ENCODE measurements at regions of chr16 and their contacts with region 1.

Region 1: DNA sequence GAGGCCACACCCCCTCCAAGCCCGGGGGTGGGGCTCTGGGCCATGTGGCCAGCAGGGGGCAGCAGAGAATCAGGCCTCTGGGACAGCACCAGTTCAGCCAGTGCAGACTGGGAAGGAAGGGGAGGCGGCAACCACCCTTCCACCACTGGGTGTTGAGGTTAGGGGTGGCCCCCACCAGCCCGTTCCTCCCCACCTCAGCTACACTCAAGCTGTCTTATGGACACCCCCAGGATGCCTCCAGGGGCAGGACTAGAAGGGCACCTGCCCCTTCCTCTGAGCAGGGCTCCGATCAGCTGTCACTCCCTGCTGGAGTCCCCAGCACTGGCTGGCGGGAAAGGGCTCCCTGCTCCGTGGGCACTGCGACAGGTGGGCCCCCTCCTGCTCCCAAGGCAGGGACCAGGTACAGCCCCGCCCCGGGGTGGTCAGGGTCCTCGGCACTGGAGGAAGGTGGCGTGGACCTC is 21.8 kb downstream of the KATNB1 start:
- DNase-seq: peak; percentile 80 to 88 (median 81)
- H3K4me3 ChIP-seq: no peak overlapping the region
- H3K4me3 Mint-ChIP-seq: no peak overlapping the region
- H3K27ac ChIP-seq: no peak overlapping the region
- H3K27ac Mint-ChIP-seq: no peak overlapping the region
- H3K4me1 ChIP-seq: no peaks in the 10 kb centered on the region
- H3K4me1 Mint-ChIP-seq: peaks cover 0 to 3% (median 0%) of the 10 kb centered on the region in 4 donors
- H3K27me3 ChIP-seq: no peaks in the 10 kb centered on the region
- H3K27me3 Mint-ChIP-seq: no peaks in the 10 kb centered on the region

Region 2: GRCh38 chr16:57863434-57864160 is 106.2 kb after region 1 on chr16:
- CTCF ChIA-PET with region 1: interaction called, 12 read pairs
- POLR2A ChIA-PET with region 1: no interaction called
- intact Hi-C with region 1: loop called (anchors 1 kb)
- DNase-seq: no peak
- H3K4me3 ChIP-seq: no peak overlapping the region
- H3K4me3 Mint-ChIP-seq: no peak overlapping the region
- H3K27ac ChIP-seq: no peak overlapping the region
- H3K27ac Mint-ChIP-seq: peak overlapping the region in 1 of 7 donors; percentile 0
- H3K4me1 ChIP-seq: no peaks in the 10 kb centered on the region
- H3K4me1 Mint-ChIP-seq: no peaks in the 10 kb centered on the region
- H3K27me3 ChIP-seq: no peaks in the 10 kb centered on the region
- H3K27me3 Mint-ChIP-seq: peaks cover 4 to 23% of the 10 kb centered on the region in 2 donors

Region 3: DNA sequence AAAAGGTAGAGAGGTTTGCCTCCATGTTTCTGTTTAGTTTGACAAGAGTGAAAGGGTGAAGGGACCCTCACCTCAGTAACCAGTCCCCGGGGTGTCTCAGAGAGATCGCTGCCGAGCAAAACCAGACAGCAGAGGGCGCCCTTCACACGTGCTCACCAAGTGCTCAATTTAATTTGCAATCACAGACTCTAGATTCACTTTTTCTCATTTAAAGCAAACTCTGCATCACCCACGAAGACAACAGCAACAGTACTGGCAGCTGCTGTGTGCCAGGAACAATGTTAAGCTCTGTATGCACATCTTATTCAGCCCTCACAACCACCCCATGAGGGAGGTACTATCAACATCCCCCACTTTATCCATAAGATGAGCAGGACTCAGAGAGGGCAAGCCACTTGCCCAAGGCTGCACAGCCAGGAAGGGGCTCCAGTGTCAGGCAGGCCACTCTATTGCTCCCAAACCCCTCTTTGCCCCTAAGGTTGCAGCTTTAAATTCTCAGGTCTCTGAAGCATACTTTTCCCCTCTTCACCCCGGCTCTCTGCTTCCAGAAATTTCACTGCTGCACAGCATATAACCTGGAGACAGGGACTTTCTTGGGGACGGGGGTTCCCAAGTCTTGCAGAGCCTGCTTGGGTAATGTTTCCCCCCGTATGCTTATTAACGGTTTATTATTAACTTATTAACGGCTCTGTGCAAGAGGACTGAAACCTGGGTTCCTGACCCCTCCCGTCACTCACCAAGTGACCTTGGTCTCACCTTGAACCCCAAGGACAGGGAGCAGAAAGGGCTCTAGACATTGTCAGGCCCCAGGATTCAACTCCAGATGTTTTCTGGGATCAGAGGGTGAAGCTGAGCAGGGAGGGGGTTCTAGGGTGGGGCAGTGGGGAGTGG is 142.7 kb after region 1 on chr16:
- CTCF ChIA-PET with region 1: interaction called, 8 read pairs
- POLR2A ChIA-PET with region 1: no interaction called
- intact Hi-C with region 1: loop called (anchors 2 kb)
- DNase-seq: peak; percentile 68 to 75 (median 71)
- H3K4me3 ChIP-seq: no peak overlapping the region
- H3K4me3 Mint-ChIP-seq: no peak overlapping the region
- H3K27ac ChIP-seq: no peak overlapping the region
- H3K27ac Mint-ChIP-seq: peak overlapping the region in 1 of 7 donors; percentile 53
- H3K4me1 ChIP-seq: peaks cover under 1% of the 10 kb centered on the region
- H3K4me1 Mint-ChIP-seq: peaks cover under 1 to 5% (median 4%) of the 10 kb centered on the region in 4 donors
- H3K27me3 ChIP-seq: no peaks in the 10 kb centered on the region
- H3K27me3 Mint-ChIP-seq: peaks cover 5 to 21% of the 10 kb centered on the region in 2 donors

Region 4: DNA sequence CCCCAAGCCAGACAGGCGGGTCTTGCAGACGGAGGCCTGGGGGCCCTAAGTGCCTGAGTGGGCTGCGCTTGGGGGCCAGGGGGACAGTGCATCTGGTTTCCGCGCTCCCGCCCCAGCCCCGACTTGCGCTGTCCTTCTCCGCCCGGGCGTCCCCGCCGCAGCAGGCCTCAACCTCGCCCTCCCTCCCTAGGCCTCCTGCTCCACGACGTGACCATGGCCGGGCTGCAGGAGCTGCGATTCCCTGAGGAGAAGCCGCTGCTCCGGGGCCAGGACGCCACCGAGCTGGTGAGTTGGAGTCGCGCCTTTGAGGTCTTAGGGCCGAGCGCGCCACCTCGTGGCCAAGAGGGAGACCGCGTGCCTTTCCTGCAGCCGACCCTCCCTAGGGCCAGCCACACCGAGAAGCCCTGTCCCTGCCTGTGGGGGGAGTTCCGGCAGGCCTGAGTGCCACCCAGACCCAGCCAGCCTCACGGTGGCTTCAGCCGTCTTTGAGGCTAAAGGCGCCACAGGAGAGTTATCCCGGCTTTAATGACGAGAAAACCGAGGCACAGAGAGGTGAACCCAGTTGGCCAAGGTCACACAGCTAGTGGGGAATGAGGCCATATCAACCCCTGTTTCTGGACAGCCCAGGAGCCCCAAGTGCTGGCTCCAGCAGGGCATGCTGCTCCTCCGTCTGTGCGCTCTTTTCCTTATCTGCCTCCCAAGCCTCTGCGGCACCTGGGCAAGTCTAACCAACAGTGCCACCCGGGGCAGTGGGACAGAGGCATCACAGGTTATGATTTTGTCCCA is 730.4 kb after region 1 on chr16:
- CTCF ChIA-PET with region 1: no interaction called
- POLR2A ChIA-PET with region 1: no interaction called
- intact Hi-C with region 1: loop called (anchors 5 kb)
- DNase-seq: peak; percentile 59 to 71 (median 62)
- H3K4me3 ChIP-seq: no peak overlapping the region
- H3K4me3 Mint-ChIP-seq: peak overlapping the region in 3 of 8 donors; percentile 20 to 39 (median 26)
- H3K27ac ChIP-seq: no peak overlapping the region
- H3K27ac Mint-ChIP-seq: no peak overlapping the region
- H3K4me1 ChIP-seq: no peaks in the 10 kb centered on the region
- H3K4me1 Mint-ChIP-seq: peaks cover 0 to 3% (median 0%) of the 10 kb centered on the region in 4 donors
- H3K27me3 ChIP-seq: no peaks in the 10 kb centered on the region
- H3K27me3 Mint-ChIP-seq: peaks cover 4 to 8% of the 10 kb centered on the region in 2 donors

Measured in CD4-positive, alpha-beta memory T cell (primary cell).